Colonic mucosa (tissue), 4 donors: ENCODE measurements at regions of chr10 and their contacts with region 1.

Region 1: GRCh38 chr10:98045785-98046389 is 15.5 kb upstream of the CRTAC1 start:
- DNase-seq: peak; percentile 46
- H3K4me3 ChIP-seq: no peak overlapping the region
- H3K27ac ChIP-seq: no peak overlapping the region
- H3K4me1 ChIP-seq: no peaks in the 10 kb centered on the region
- H3K27me3 ChIP-seq: no peaks in the 10 kb centered on the region
- CTCF ChIP-seq: peak; percentile 85

Region 2: GRCh38 chr10:97792141-97792721 is 253.7 kb before region 1 on chr10:
- intact Hi-C with region 1: loop called (anchors 10 kb)
- DNase-seq: peak; percentile 76
- H3K4me3 ChIP-seq: no peak overlapping the region
- H3K27ac ChIP-seq: no peak overlapping the region
- H3K4me1 ChIP-seq: no peaks in the 10 kb centered on the region
- H3K27me3 ChIP-seq: no peaks in the 10 kb centered on the region
- CTCF ChIP-seq: peak; percentile 54

Region 3: GRCh38 chr10:97914837-97915211 is 131.1 kb before region 1 on chr10:
- intact Hi-C with region 1: loop called (anchors 2 kb)
- DNase-seq: peak; percentile 78
- H3K4me3 ChIP-seq: no peak overlapping the region
- H3K27ac ChIP-seq: no peak overlapping the region
- H3K4me1 ChIP-seq: no peaks in the 10 kb centered on the region
- H3K27me3 ChIP-seq: no peaks in the 10 kb centered on the region
- CTCF ChIP-seq: peak; percentile 82

Region 4: GRCh38 chr10:97961979-97962378 is 83.9 kb before region 1 on chr10:
- intact Hi-C with region 1: no loop called
- DNase-seq: no peak
- H3K4me3 ChIP-seq: no peak overlapping the region
- H3K27ac ChIP-seq: no peak overlapping the region
- H3K4me1 ChIP-seq: no peaks in the 10 kb centered on the region
- H3K27me3 ChIP-seq: no peaks in the 10 kb centered on the region
- CTCF ChIP-seq: no peak

Region 5: GRCh38 chr10:98684019-98684899 is 638.4 kb after region 1 on chr10:
- intact Hi-C with region 1: no loop called
- DNase-seq: no peak
- H3K4me3 ChIP-seq: no peak overlapping the region
- H3K27ac ChIP-seq: no peak overlapping the region
- H3K4me1 ChIP-seq: no peaks in the 10 kb centered on the region
- H3K27me3 ChIP-seq: no peaks in the 10 kb centered on the region
- CTCF ChIP-seq: no peak